MCF 10A (cell line): ENCODE measurements at regions of chr4 and their contacts with region 1.

Region 1: DNA sequence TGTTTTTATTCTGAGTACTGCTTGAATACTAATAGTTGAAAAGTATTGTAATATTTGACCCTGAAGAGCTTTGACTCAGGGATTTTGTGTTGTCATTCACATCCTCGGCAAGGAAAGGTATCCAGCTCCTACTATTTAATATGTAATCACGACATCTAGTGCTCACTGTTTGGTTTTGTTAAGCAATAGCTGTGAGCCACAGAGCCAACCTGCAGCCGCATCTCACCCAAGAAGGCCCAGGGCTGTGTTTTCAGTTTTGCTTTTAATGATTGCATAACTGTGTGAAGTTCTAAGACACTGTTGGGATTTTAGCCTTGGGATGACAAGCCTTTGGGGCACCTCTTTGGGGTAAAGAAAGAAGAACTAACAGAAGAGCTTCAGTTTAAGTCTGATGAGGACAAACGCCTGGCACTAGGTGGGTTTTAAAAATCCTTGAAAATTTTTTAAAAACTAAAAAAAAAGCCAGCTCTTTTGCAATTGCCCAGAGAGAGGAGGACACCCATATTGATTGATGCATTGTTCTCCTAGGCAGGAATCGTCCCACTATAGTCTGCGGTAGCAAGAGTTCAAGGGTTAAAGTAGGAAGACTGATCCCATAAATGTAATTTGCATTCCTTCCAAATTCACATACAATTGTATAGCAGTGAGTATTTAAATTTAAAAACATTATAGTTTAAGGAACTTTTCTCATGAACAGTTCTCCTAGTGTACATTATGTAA is 157.8 kb downstream of the RELL1 start:
- DNase-seq: peak; percentile 77
- H3K4me3 Mint-ChIP-seq: no peak overlapping the region
- H3K27ac Mint-ChIP-seq: no peak overlapping the region
- H3K4me1 Mint-ChIP-seq: peaks cover 6% of the 10 kb centered on the region
- H3K27me3 Mint-ChIP-seq: no peaks in the 10 kb centered on the region
- CTCF ChIP-seq: no peak

Region 2: GRCh38 chr4:37157476-37158167 is 370.7 kb before region 1 on chr4:
- CTCF ChIA-PET with region 1: no interaction called
- POLR2A ChIA-PET with region 1: no interaction called
- intact Hi-C with region 1: no loop called
- DNase-seq: peak; percentile 11
- H3K4me3 Mint-ChIP-seq: no peak overlapping the region
- H3K27ac Mint-ChIP-seq: no peak overlapping the region
- H3K4me1 Mint-ChIP-seq: no peaks in the 10 kb centered on the region
- H3K27me3 Mint-ChIP-seq: no peaks in the 10 kb centered on the region
- CTCF ChIP-seq: no peak

Region 3: DNA sequence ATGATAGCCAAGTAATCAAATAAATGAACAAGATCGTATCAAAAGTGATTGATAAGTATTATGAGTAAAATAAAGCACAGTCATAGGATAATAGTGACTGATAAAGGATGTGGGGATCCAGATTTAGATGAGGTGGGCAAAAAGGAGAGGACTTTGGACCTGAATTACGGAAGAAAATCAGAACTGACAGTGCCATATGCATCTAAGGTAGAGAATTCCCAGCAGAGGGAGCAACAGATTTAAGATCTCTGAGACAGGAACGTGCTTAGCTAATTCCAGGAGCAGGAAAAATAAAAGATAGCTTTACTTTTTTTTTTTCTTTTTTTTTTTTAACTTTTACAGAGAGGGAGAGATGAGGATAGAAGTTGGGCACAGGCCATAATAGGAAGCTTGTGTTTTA is 93.9 kb before region 1 on chr4:
- CTCF ChIA-PET with region 1: interaction called, 17 read pairs
- POLR2A ChIA-PET with region 1: no interaction called
- intact Hi-C with region 1: no loop called
- DNase-seq: peak; percentile 21
- H3K4me3 Mint-ChIP-seq: no peak overlapping the region
- H3K27ac Mint-ChIP-seq: peak overlapping the region; percentile 75
- H3K4me1 Mint-ChIP-seq: no peaks in the 10 kb centered on the region
- H3K27me3 Mint-ChIP-seq: no peaks in the 10 kb centered on the region
- CTCF ChIP-seq: peak; percentile 29

Region 4: GRCh38 chr4:37568481-37568880 is 40.2 kb after region 1 on chr4:
- CTCF ChIA-PET with region 1: interaction called, 4 read pairs
- POLR2A ChIA-PET with region 1: no interaction called
- intact Hi-C with region 1: loop called (anchors 2 kb)
- DNase-seq: no peak
- H3K4me3 Mint-ChIP-seq: no peak overlapping the region
- H3K27ac Mint-ChIP-seq: no peak overlapping the region
- H3K4me1 Mint-ChIP-seq: peaks cover 4% of the 10 kb centered on the region
- H3K27me3 Mint-ChIP-seq: no peaks in the 10 kb centered on the region
- CTCF ChIP-seq: no peak

Region 5: DNA sequence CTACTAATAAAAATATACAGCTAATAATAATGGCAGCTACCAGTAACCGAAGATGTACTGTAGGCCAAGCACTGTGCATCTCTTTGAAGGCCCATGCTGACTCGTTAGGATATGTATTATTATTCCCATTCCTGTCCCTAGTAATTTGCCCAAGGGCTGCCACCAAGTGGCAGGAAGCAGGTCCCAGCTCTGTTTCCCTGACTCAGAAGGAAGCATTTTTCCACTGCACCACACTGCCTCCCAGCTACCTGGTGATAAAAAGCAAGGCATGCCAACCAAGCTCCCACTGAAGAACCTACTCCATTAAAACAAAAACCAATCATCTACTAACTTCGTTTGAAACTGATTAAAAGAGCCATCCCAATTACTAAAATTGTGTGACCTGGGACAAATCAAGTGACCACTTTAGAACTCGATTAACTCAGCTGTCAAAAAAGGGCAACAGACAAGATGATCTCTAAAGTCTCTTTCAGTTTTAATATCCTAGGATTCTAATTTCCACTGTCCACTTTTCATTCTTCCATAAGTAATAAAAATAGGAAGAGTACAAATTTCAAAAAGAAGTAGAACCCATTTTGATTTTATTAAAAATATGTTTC is 273.8 kb after region 1 on chr4:
- CTCF ChIA-PET with region 1: interaction called, 10 read pairs
- POLR2A ChIA-PET with region 1: no interaction called
- intact Hi-C with region 1: no loop called
- DNase-seq: peak; percentile 87
- H3K4me3 Mint-ChIP-seq: no peak overlapping the region
- H3K27ac Mint-ChIP-seq: no peak overlapping the region
- H3K4me1 Mint-ChIP-seq: peaks cover 10% of the 10 kb centered on the region
- H3K27me3 Mint-ChIP-seq: no peaks in the 10 kb centered on the region
- CTCF ChIP-seq: peak; percentile 53